ENCODE measurements at regions of chr11 and their contacts with region 1.

Region 1: GRCh38 chr11:96242971-96243647 is 99.9 kb downstream of the MAML2 start:
- DNase-seq: peak; percentile 91 to 97
- H3K4me3 ChIP-seq: peak overlapping the region; percentile 55
- H3K27ac ChIP-seq: peak overlapping the region; percentile 94
- H3K4me1 ChIP-seq: peaks cover 61% of the 10 kb centered on the region
- H3K27me3 ChIP-seq: no peaks in the 10 kb centered on the region
- CTCF ChIP-seq: no peak

Region 2: DNA sequence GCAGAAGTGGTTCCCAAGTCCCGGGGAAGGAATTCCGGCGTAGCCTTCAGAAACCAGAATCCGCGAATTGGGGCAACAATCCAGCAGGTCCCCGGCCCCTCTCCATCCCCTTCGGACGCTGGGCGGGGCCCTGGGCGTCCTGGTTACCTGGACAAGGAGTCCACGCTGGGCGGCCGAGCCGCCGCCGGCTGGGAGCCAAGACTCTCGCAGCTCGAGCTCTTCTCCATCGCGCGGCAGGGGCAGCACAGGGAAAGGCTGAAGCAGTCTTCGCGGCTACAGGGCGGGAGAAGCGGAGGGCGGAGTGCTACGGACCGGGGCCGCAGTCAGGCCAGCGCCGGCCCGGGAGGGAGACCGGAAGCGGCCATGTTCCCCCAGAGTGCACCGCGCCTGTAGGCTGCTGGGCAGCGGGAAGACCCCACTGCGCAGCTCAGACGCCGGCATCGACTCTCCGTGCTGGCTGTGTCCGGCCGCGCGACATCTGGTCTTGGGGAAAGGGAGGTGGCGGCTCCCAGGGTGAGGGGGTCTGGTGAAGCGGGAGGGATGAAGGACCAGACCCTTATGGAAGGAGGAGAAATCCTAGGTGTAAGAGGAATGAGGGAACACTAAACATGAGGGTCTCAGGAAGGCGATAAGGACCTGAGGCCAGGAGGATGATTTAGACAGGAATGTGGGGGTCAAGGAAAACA is 319.2 kb before region 1 on chr11 and contains the start of gene MTMR2:
- CTCF ChIA-PET with region 1: no interaction called
- POLR2A ChIA-PET with region 1: interaction called, 4 read pairs
- intact Hi-C with region 1: loop called (anchors 10 kb)
- DNase-seq: peak; percentile 72 to 77
- H3K4me3 ChIP-seq: peak within 1 kb of the TSS; percentile 67
- H3K27ac ChIP-seq: peak within 1 kb of the TSS; percentile 97
- H3K4me1 ChIP-seq: peaks cover 37% of the 10 kb centered on the region
- H3K27me3 ChIP-seq: no peaks in the 10 kb centered on the region
- CTCF ChIP-seq: no peak
- total RNA-seq, gene MTMR2: 41.6 and 60.7 TPM in 2 replicates

Region 3: GRCh38 chr11:96054870-96055705 is 188.0 kb before region 1 on chr11:
- CTCF ChIA-PET with region 1: no interaction called
- POLR2A ChIA-PET with region 1: no interaction called
- intact Hi-C with region 1: loop called (anchors 5 kb)
- DNase-seq: peak in 1 of 2 experiments; percentile 50
- H3K4me3 ChIP-seq: no peak overlapping the region
- H3K27ac ChIP-seq: peak overlapping the region; percentile 47
- H3K4me1 ChIP-seq: peaks cover 64% of the 10 kb centered on the region
- H3K27me3 ChIP-seq: no peaks in the 10 kb centered on the region
- CTCF ChIP-seq: peak; percentile 79

Region 4: GRCh38 chr11:96172604-96173003 is 70.5 kb before region 1 on chr11:
- CTCF ChIA-PET with region 1: no interaction called
- POLR2A ChIA-PET with region 1: interaction called, 12 read pairs
- intact Hi-C with region 1: no loop called
- DNase-seq: no peak
- H3K4me3 ChIP-seq: no peak overlapping the region
- H3K27ac ChIP-seq: no peak overlapping the region
- H3K4me1 ChIP-seq: peaks cover 26% of the 10 kb centered on the region
- H3K27me3 ChIP-seq: no peaks in the 10 kb centered on the region
- CTCF ChIP-seq: no peak

Region 5: DNA sequence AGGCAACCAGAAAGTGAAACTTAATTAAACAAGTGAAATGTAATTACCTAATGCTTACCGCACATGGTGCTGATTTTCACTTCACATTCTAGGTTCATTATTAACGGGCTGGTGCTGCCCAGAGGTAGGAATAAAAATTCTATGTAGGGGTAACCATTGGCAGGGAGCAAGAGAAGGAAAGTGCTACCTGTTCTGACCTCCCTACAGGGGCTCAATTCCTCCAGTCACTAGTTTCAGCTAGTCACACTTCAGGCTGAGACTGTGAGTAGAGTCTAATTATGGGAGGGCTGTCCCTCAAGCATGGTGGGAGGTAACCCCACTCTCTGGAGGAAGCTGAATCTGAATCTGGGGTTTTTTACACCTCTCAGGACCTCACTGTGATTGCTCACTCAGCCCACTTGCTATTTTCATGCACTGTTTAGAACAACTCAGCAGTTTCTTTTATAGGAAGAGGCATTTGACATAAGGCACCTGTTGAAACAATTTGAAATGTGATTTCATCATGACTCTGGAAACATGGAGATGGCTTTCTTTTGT is 24.5 kb after region 1 on chr11:
- CTCF ChIA-PET with region 1: no interaction called
- POLR2A ChIA-PET with region 1: no interaction called
- intact Hi-C with region 1: no loop called
- DNase-seq: peak in 1 of 2 experiments; percentile 44
- H3K4me3 ChIP-seq: no peak overlapping the region
- H3K27ac ChIP-seq: peak overlapping the region; percentile 51
- H3K4me1 ChIP-seq: peaks cover 59% of the 10 kb centered on the region
- H3K27me3 ChIP-seq: no peaks in the 10 kb centered on the region
- CTCF ChIP-seq: no peak

Region 6: DNA sequence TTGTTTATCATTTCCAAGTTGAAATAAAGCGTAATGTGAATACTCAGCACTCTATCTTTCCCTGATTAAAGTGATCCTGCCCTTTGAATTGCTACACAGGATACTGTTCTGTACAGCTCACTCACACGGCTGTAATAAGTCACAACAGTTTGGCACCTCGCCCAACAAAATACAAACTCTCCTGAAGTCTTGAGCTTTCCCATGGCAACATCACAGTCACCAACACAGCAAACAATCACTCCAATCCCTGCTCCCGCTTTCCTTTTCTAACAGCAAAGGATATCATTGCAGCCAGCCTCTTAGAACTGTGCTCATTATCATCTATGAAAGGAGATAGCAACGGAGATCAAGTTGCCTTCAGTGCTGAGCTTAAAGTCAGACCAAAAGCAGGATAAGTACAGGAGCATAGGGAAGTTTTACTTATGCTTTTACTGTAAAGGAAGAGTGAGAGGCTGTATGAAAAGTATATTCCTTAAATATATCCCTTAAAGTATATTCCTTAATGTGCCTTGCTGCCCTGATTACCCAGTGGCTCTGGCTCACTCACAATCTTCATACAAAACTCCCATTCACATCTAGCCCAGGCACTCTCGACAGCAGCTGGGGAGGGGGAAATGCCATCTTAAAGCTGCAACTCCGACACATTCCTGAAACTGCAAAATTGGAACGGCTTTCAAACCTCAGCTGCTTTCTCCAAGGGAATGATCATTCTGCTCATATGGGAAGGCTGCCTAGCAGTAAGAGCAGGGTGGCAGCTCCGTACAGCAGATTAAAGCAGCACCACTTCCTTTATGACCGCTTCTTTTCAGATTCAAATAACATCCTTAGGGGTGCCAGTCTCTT is 64.0 kb after region 1 on chr11:
- CTCF ChIA-PET with region 1: no interaction called
- POLR2A ChIA-PET with region 1: interaction called, 6 read pairs
- intact Hi-C with region 1: loop called (anchors 1 kb)
- DNase-seq: peak; percentile 84 to 100
- H3K4me3 ChIP-seq: peak overlapping the region; percentile 43
- H3K27ac ChIP-seq: peak overlapping the region; percentile 96
- H3K4me1 ChIP-seq: peaks cover 99% of the 10 kb centered on the region
- H3K27me3 ChIP-seq: no peaks in the 10 kb centered on the region
- CTCF ChIP-seq: no peak